B cell (primary cell): ENCODE measurements at regions of chr10 and their contacts with region 1.

Region 1: GRCh38 chr10:14926722-14927416 is 27.0 kb downstream of the DCLRE1C start:
- DNase-seq: peak; percentile 61
- ATAC-seq: peak; percentile 96
- H3K4me3 ChIP-seq: peak overlapping the region in 1 of 5 experiments; percentile 9
- H3K4me3 Mint-ChIP-seq: peak overlapping the region; percentile 20
- H3K27ac ChIP-seq: peak overlapping the region; percentile 51 to 69
- H3K27ac Mint-ChIP-seq: peak overlapping the region; percentile 50
- H3K4me1 ChIP-seq: peaks cover 12 to 20% of the 10 kb centered on the region in 2 donors
- H3K4me1 Mint-ChIP-seq: peaks cover 26% of the 10 kb centered on the region
- H3K27me3 ChIP-seq: no peaks in the 10 kb centered on the region
- H3K27me3 Mint-ChIP-seq: no peaks in the 10 kb centered on the region
- CTCF ChIP-seq: no peak

Region 2: DNA sequence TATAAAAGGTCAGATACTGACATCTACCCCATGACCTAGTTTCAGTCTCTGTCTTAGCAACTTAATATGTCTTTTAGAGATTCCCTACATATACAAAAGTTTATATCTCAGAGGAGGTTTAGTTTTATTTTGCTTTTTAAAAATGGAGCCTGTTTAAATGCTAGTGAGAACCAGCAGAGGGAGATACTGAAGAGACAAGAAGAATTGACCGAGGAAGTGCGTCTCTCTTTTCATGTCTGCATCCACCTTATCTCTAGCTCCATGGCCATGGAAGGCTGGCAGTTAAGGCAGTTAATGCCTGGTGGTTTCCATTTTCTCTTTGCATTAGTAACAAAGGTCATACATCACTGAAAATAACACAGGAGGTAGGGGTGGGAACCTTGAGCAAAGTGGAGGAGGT is 37.6 kb before region 1 on chr10:
- CTCF ChIA-PET with region 1: no interaction called
- POLR2A ChIA-PET with region 1: interaction called, 10 read pairs
- intact Hi-C with region 1: no loop called
- DNase-seq: peak; percentile 16
- ATAC-seq: no peak
- H3K4me3 ChIP-seq: no peak overlapping the region
- H3K4me3 Mint-ChIP-seq: no peak overlapping the region
- H3K27ac ChIP-seq: no peak overlapping the region
- H3K27ac Mint-ChIP-seq: no peak overlapping the region
- H3K4me1 ChIP-seq: no peaks in the 10 kb centered on the region
- H3K4me1 Mint-ChIP-seq: no peaks in the 10 kb centered on the region
- H3K27me3 ChIP-seq: no peaks in the 10 kb centered on the region
- H3K27me3 Mint-ChIP-seq: no peaks in the 10 kb centered on the region
- CTCF ChIP-seq: peak; percentile 55

Region 3: DNA sequence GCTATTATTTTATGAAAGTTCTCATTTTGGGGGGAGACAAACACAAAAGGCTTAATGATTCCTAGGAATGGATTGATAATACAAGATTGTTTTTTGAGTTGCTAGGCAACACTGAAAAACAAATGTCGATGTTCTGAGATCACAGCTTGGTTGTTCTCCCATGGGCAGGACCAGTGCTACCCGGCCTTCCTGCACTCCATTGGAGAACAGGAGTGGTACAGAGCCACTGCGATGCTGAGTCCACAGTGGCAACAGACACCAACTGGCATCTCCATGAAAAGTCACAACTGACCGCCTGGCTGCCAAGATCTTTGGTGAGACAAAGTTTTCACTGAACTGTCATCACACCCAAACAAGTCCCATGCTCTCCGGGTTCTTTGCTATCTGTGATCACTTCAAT is 310.5 kb after region 1 on chr10:
- CTCF ChIA-PET with region 1: no interaction called
- POLR2A ChIA-PET with region 1: no interaction called
- intact Hi-C with region 1: no loop called
- DNase-seq: no peak
- ATAC-seq: no peak
- H3K4me3 ChIP-seq: no peak overlapping the region
- H3K4me3 Mint-ChIP-seq: no peak overlapping the region
- H3K27ac ChIP-seq: no peak overlapping the region
- H3K27ac Mint-ChIP-seq: no peak overlapping the region
- H3K4me1 ChIP-seq: no peaks in the 10 kb centered on the region
- H3K4me1 Mint-ChIP-seq: no peaks in the 10 kb centered on the region
- H3K27me3 ChIP-seq: no peaks in the 10 kb centered on the region
- H3K27me3 Mint-ChIP-seq: peaks cover 6% of the 10 kb centered on the region
- CTCF ChIP-seq: no peak